ENCODE measurements at regions of chr14 and their contacts with region 1.

Region 1: GRCh38 chr14:94136575-94137331 is 7.3 kb upstream of the IFI27L2 start:
- DNase-seq: peak; percentile 87 to 88
- ATAC-seq: peak; percentile 87 to 95 (median 93)
- H3K4me3 ChIP-seq: no peak overlapping the region
- H3K27ac ChIP-seq: no peak overlapping the region
- H3K4me1 ChIP-seq: peaks cover 0 to 5% (median 0%) of the 10 kb centered on the region in 9 donors
- H3K27me3 ChIP-seq: peaks cover 0 to 9% (median 4%) of the 10 kb centered on the region in 7 donors
- CTCF ChIP-seq: peak; percentile 90 to 99 (median 96)

Region 2: DNA sequence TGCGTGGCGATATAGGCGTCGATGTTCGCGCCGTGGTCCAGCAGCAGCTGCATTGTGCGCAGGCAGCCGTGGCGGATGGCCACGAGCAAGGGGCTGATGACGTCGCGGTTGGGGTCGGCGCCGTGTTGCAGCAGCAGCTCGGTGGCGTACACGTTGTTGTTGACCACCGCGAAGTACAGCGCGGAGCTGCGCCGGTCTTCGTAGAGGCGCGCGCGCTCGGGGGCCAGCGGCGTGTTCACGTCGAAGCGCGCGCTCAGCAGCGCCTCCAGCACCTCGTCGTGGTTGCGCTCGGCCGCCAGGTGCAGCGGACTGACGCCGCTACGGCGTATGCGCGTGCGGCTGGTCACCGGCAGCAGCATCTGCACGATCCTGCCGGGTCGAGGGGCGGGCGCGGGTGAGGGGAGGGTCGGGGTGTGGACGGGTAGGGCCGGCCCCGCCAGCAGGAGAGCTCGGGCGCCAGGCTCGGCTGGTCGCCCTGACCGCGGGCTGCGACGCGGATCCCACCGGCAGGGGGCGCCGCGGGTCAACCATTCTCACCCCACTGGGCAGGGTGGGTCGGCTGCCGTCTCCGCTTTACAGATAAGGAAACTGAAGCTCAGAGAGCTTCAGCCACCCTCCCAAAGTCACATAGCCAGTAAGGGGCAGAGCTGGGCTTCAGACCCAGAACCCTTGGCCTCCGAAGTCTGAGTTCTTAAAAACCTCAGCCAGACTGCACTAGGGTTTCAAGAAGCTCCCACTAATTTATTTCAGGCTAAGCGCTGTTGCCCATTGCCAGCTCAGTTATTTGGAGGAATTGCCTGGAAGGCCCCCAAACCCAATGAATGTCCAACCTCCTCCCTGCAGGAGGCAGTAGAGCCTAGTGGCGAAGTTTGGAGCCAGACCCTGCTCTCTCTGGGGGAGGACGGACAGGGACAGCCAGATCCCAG is 197.2 kb before region 1 on chr14:
- intact Hi-C with region 1: loop called in 7 of 10 experiments (anchors 10 kb)
- DNase-seq: peak; percentile 72 to 82
- ATAC-seq: peak; percentile 73 to 87 (median 77)
- H3K4me3 ChIP-seq: peak overlapping the region in 5 of 10 donors; percentile 6 to 48 (median 32)
- H3K27ac ChIP-seq: peak overlapping the region in 1 of 10 donors; percentile 17
- H3K4me1 ChIP-seq: peaks cover 0 to 20% (median 14%) of the 10 kb centered on the region in 9 donors
- H3K27me3 ChIP-seq: peaks cover 0 to 25% (median 17%) of the 10 kb centered on the region in 7 donors
- CTCF ChIP-seq: peak; percentile 77 to 96 (median 86)

Region 3: GRCh38 chr14:94041551-94042346 is 95.0 kb before region 1 on chr14:
- intact Hi-C with region 1: loop called (anchors 1 to 5 kb)
- DNase-seq: peak; percentile 36 to 41
- ATAC-seq: peak; percentile 65 to 90 (median 81)
- H3K4me3 ChIP-seq: no peak overlapping the region
- H3K27ac ChIP-seq: peak overlapping the region in 8 of 10 donors; percentile 29 to 75 (median 49)
- H3K4me1 ChIP-seq: peaks cover 0 to 30% (median 15%) of the 10 kb centered on the region in 9 donors
- H3K27me3 ChIP-seq: no peaks in the 10 kb centered on the region
- CTCF ChIP-seq: no peak

Region 4: GRCh38 chr14:94080471-94081289 is 56.1 kb before region 1 on chr14 and contains the start of gene DDX24:
- intact Hi-C with region 1: loop called in 2 of 10 experiments (anchors 5 kb)
- DNase-seq: peak; percentile 97
- ATAC-seq: peak; percentile 99 to 100 (median 100)
- H3K4me3 ChIP-seq: peak within 1 kb of the TSS; percentile 71 to 99 (median 97)
- H3K27ac ChIP-seq: peak within 1 kb of the TSS; percentile 61 to 96 (median 92)
- H3K4me1 ChIP-seq: peaks cover 10 to 55% (median 52%) of the 10 kb centered on the region in 9 donors
- H3K27me3 ChIP-seq: no peaks in the 10 kb centered on the region
- CTCF ChIP-seq: no peak
- total RNA-seq, gene DDX24: 190 to 269 (median 240) TPM

Region 5: GRCh38 chr14:94180655-94181271 is 44.0 kb after region 1 on chr14:
- intact Hi-C with region 1: loop called in 5 of 10 experiments (anchors 5 kb)
- DNase-seq: no peak
- ATAC-seq: peak in 3 of 8 donors; percentile 33 to 49 (median 47)
- H3K4me3 ChIP-seq: peak overlapping the region in 3 of 10 donors; percentile 15 to 30 (median 18)
- H3K27ac ChIP-seq: no peak overlapping the region
- H3K4me1 ChIP-seq: peaks cover 0 to 8% (median under 1%) of the 10 kb centered on the region in 9 donors
- H3K27me3 ChIP-seq: peaks cover 2 to 67% (median 30%) of the 10 kb centered on the region in 7 donors
- CTCF ChIP-seq: peak; percentile 31 to 70 (median 61)

Region 6: DNA sequence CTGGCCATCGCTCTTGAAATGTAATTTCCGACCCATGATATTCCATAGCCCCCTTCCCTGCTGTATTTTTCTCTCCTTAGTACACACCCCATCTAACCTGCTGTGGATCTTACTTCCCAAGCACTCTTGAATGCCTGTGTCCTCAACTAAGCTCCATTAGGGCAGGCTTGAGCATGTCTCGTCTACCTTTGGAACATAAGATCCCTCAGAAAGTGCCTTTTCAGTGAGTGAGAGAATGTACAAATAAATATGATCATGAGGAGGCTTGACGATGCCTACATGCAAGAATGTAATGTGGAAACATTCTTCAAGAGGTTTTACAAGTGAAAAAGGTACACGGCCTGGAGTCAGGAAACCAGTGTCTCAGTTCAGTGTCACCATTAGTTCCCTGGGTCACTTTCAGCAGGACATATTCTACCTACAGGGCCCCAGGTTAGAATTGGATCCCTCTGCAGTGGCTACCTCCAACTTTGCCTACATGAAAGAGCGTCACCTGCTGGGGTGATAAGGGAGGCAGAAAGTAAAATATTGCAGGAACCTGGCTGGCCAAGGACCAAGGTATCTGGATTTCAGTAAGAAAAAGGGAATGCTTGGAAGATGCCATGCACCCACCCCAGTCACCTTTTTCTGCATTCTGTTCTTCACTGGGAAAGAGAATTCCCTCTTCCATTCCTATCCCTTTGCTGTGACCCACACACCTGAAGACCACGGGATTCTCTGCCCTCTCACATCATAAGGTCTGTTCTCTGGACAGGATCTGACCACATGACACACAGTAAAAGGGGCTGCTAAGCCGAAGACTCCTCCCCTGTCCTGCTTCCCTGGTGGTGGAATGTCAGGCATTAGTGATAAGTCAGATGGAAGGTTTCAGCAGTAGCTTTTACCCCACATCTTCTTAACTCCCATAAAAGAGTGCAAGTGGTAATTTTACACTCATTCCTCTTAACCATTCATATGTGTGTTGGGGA is 276.2 kb after region 1 on chr14:
- intact Hi-C with region 1: no loop called
- DNase-seq: no peak
- ATAC-seq: no peak
- H3K4me3 ChIP-seq: no peak overlapping the region
- H3K27ac ChIP-seq: no peak overlapping the region
- H3K4me1 ChIP-seq: no peaks in the 10 kb centered on the region
- H3K27me3 ChIP-seq: peaks cover 0 to 31% (median 16%) of the 10 kb centered on the region in 7 donors
- CTCF ChIP-seq: peak in 2 of 9 donors; percentile 6 to 28

Region 7: DNA sequence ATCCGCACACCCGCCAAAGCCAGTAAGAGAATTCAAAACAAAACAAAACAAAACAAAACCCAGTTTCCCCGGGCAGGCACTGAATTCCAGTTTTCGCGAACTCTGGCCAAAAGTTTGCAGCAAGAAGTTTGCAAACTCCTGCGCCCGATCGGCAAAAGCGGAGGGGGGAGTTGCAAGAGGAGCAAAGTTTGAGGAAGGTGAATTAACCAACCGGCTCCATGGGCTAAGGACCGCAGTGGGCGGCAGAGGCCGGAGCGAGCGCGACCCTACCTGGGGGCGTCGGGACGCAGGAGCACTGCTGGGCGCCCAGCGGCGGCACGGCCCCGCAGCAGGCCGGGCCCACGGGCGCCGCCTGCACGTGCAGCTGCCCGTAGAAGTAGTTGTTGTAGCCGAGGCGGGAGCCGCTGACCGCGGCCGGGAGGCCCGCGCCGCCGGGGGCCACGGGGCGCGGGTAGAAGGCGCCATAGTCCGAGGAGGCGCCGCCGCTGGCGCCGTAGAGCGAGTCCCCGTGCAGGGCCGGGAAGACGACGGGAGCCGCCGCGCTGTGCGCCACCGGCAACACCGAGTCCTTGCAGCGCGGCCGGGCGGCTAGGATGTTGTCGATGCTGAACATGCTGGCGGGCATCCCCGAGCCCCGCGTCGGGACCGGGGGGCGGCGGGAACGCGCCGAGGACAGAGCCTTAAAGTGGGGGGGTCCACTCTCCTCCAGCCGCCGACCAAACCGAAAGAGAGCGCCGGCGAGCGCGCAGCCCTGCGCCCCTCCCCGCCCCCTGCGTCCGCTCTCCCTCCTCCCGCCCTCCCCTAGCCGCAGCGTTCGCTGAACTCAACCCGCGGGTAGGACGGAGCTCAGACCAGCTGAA is 632.9 kb after region 1 on chr14 and contains the start of gene GSC:
- intact Hi-C with region 1: no loop called
- DNase-seq: peak; percentile 42 to 46
- ATAC-seq: peak; percentile 60 to 89 (median 76)
- H3K4me3 ChIP-seq: peak within 1 kb of the TSS; percentile 16 to 62 (median 56)
- H3K27ac ChIP-seq: peak within 1 kb of the TSS in 3 of 10 donors; percentile 19 to 47 (median 40)
- H3K4me1 ChIP-seq: peaks cover 0 to 44% (median 35%) of the 10 kb centered on the region in 9 donors
- H3K27me3 ChIP-seq: peaks cover 57 to 100% (median 100%) of the 10 kb centered on the region in 7 donors
- CTCF ChIP-seq: no peak
- total RNA-seq, gene GSC: 0.25 to 0.54 (median 0.35) TPM in 6 of 10 donors, not detected in the others